ENCODE measurements at regions of chr18 and their contacts with region 1.

Region 1: DNA sequence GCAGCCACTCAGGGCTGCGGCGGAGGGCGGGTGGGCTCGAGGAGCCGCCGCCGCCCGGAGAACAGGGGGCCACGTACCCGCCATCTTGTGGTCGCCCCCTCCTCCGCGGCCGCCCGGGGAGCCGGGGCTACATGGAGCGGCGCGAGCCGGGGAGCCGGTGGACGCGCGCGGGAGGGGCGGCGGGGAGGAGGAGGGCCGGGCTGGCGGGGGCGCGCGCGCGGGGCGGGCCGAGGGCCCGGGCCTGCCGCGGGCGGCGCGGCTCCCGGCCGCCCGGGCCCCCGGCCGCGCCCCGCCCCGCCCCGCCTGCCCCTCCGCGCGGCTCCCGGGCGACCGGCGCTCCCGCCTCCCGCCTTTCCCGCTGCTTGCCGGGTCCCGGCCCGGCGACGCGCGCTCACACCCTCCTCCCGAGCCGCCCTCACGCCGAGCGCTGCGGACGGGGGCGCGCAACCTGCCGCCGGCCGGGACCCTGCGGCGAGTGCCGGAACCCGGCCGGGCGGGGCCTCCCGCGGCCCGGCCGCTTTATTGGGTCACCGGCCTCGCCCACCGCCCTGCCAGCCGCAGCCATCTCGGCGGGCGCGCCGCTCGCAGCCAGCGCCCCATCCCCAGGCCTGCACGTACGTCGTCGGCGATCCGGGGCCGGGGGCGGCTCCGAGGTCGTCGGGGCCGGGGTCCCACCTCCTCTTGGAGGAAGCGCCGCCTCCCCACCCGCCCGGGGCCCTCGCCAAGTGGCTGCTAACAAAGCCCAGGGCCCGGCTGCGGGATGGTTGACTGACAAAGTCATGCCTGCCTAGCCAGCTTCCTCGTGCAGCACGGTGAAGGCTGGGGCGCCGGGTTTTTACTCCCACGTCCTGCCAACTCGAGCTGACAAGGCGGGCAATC is at the start of gene PPP4R1:
- DNase-seq: peak; percentile 74
- ATAC-seq: peak; percentile 68
- H3K4me3 Mint-ChIP-seq: peak within 1 kb of the TSS; percentile 86
- H3K27ac Mint-ChIP-seq: peak within 1 kb of the TSS; percentile 90
- H3K4me1 Mint-ChIP-seq: peaks cover 26% of the 10 kb centered on the region
- H3K27me3 Mint-ChIP-seq: no peaks in the 10 kb centered on the region
- CTCF ChIP-seq: no peak
- total RNA-seq, gene PPP4R1: 48.1 and 51.3 TPM in 2 replicates

Region 2: DNA sequence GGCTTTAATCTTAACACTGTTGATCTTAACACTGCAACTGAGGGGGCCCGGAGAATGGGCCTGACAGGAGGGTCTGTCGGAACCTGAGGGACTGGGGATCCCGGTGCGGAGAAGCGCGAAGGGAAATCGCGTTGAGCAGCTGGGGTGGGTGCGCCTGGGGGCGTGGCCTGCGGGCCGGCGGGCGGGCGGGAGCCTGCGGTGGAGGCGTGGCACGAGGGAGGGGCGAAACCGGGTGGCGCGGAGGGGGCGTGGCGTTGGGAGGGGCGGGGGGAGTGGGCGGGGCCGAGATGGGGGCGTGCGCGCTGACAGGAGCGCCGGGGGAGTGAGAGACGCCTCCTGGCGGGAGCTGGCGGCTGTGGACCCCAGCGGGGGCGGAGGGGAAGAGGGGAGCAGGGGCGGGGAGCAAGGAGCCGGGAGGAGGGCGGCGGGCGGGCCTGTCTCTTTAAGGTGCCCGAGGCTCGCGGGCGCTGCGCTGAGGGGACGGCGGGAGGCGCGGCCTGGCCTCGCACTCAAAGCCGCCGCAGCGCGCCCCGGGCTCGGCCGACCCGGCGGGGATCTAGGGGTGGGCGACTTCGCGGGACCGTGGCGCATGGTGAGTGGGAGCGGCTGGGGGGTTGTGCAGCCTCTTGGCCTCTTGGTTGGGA is 280.2 kb before region 1 on chr18 and contains the start of gene TWSG1:
- CTCF ChIA-PET with region 1: no interaction called
- POLR2A ChIA-PET with region 1: no interaction called
- intact Hi-C with region 1: loop called (anchors 1 kb)
- DNase-seq: peak; percentile 86
- ATAC-seq: peak; percentile 94
- H3K4me3 Mint-ChIP-seq: peak within 1 kb of the TSS; percentile 89
- H3K27ac Mint-ChIP-seq: peak within 1 kb of the TSS; percentile 60
- H3K4me1 Mint-ChIP-seq: peaks cover 20% of the 10 kb centered on the region
- H3K27me3 Mint-ChIP-seq: no peaks in the 10 kb centered on the region
- CTCF ChIP-seq: no peak
- total RNA-seq, gene TWSG1: 4.1 and 4.8 TPM in 2 replicates

Region 3: GRCh38 chr18:9417073-9417841 is 197.4 kb before region 1 on chr18:
- CTCF ChIA-PET with region 1: no interaction called
- POLR2A ChIA-PET with region 1: no interaction called
- intact Hi-C with region 1: no loop called
- DNase-seq: no peak
- ATAC-seq: no peak
- H3K4me3 Mint-ChIP-seq: no peak overlapping the region
- H3K27ac Mint-ChIP-seq: no peak overlapping the region
- H3K4me1 Mint-ChIP-seq: peaks cover 4% of the 10 kb centered on the region
- H3K27me3 Mint-ChIP-seq: no peaks in the 10 kb centered on the region
- CTCF ChIP-seq: no peak

Region 4: GRCh38 chr18:9708057-9708433 is 93.4 kb after region 1 on chr18 and contains the start of gene RAB31:
- CTCF ChIA-PET with region 1: interaction called, 3 read pairs
- POLR2A ChIA-PET with region 1: interaction called, 8 read pairs
- intact Hi-C with region 1: loop called (anchors 1 kb)
- DNase-seq: peak; percentile 61
- ATAC-seq: peak; percentile 47
- H3K4me3 Mint-ChIP-seq: peak within 1 kb of the TSS; percentile 96
- H3K27ac Mint-ChIP-seq: peak within 1 kb of the TSS; percentile 95
- H3K4me1 Mint-ChIP-seq: peaks cover 54% of the 10 kb centered on the region
- H3K27me3 Mint-ChIP-seq: peaks cover 2% of the 10 kb centered on the region
- CTCF ChIP-seq: no peak
- total RNA-seq, gene RAB31: 33.0 and 36.0 TPM in 2 replicates

Region 5: DNA sequence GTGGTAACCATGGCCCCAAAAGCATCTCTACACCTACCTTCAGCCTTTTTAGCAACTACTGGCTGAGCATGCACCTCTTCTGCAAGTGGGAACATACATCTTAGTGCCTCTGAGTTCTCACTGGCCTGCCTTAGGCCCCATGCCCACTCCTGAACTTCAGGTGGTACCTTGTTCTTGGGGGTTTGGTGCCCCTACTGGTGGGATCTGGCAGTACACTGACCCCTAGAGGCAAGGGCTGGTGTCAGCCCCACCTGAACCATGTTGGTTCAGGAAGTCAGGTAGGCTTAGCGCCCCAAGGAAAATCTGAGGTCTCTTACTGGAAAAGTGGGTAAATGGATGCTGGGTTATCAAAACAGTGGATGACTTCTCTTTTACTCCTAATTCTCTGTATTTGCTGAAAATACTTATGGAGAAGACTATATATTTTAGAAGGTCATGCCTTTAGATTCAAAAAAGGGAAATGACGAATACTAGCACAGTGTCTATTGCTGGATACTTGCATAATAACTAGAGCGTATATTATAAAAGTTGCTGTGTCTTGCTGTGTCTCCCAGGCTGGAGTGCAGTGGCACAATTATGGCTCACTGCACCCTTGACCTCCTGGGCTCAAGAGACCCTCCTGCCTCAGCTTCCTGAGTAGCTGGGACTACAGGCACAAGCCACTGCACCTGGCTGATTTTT is 178.1 kb after region 1 on chr18:
- CTCF ChIA-PET with region 1: no interaction called
- POLR2A ChIA-PET with region 1: no interaction called
- intact Hi-C with region 1: loop called (anchors 1 kb)
- DNase-seq: no peak
- ATAC-seq: peak; percentile 56
- H3K4me3 Mint-ChIP-seq: no peak overlapping the region
- H3K27ac Mint-ChIP-seq: no peak overlapping the region
- H3K4me1 Mint-ChIP-seq: no peaks in the 10 kb centered on the region
- H3K27me3 Mint-ChIP-seq: no peaks in the 10 kb centered on the region
- CTCF ChIP-seq: no peak